Activated T-helper 1 cell treated with anti-CD3 and anti-CD28 coated beads, Interleukin-12 subunit alpha, Interleukin-12 subunit beta, Interleukin-2, Interleukin-4 antibody, amounts not matched to agents 30 ng/mL and 10 ng/mL and 1 ng/mL, durations not matched to agents 14 hours and 24 hours and 36 hours (primary cell): ENCODE measurements at regions of chr2 and their contacts with region 1.

Region 1: GRCh38 chr2:84846041-84846663 is 34.7 kb downstream of the TRABD2A start:
- DNase-seq: peak; percentile 36
- H3K4me3 Mint-ChIP-seq: peak overlapping the region; percentile 64
- H3K27ac Mint-ChIP-seq: peak overlapping the region; percentile 96
- H3K4me1 Mint-ChIP-seq: peaks cover 89% of the 10 kb centered on the region
- H3K27me3 Mint-ChIP-seq: no peaks in the 10 kb centered on the region

Region 2: GRCh38 chr2:84781942-84782716 is 64.0 kb before region 1 on chr2:
- intact Hi-C with region 1: loop called (anchors 1 kb)
- DNase-seq: peak; percentile 44
- H3K4me3 Mint-ChIP-seq: no peak overlapping the region
- H3K27ac Mint-ChIP-seq: peak overlapping the region; percentile 85
- H3K4me1 Mint-ChIP-seq: peaks cover 69% of the 10 kb centered on the region
- H3K27me3 Mint-ChIP-seq: no peaks in the 10 kb centered on the region

Region 3: GRCh38 chr2:84832772-84833461 is 13.2 kb before region 1 on chr2:
- intact Hi-C with region 1: loop called (anchors 1 kb)
- DNase-seq: peak; percentile 27
- H3K4me3 Mint-ChIP-seq: peak overlapping the region; percentile 31
- H3K27ac Mint-ChIP-seq: peak overlapping the region; percentile 77
- H3K4me1 Mint-ChIP-seq: peaks cover 24% of the 10 kb centered on the region
- H3K27me3 Mint-ChIP-seq: no peaks in the 10 kb centered on the region

Region 4: DNA sequence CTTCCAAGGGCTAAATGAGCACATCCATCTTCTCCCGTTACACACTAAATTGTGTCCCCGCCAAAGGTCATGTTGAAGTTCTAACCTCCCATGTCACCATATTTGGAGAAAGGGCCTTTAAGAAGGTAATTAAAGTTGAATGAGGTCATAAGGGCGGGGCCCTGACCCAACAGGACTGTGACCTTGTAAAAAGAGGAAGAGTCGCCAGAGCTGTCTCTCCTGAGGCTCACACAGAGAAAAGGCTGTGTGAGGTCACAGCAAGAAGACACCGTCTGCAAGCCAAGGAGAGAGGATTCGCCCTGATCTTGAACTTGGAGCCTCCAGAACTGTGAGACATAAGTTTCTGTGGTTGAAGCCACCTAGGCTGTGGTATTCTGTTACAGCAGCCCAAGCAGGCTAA is 10.6 kb after region 1 on chr2:
- intact Hi-C with region 1: loop called (anchors 1 kb)
- DNase-seq: peak; percentile 33
- H3K4me3 Mint-ChIP-seq: peak overlapping the region; percentile 72
- H3K27ac Mint-ChIP-seq: peak overlapping the region; percentile 83
- H3K4me1 Mint-ChIP-seq: peaks cover 85% of the 10 kb centered on the region
- H3K27me3 Mint-ChIP-seq: no peaks in the 10 kb centered on the region